ENCODE measurements at regions of chr2 and their contacts with region 1.

Region 1: GRCh38 chr2:227479865-227480475 is 8.0 kb downstream of the AGFG1 start:
- DNase-seq: peak; percentile 35
- ATAC-seq: no peak
- H3K4me3 ChIP-seq: no peak overlapping the region
- H3K4me3 Mint-ChIP-seq: no peak overlapping the region
- H3K27ac ChIP-seq: peak overlapping the region in 1 of 2 donors; percentile 63
- H3K27ac Mint-ChIP-seq: no peak overlapping the region
- H3K4me1 ChIP-seq: peaks cover 20 to 40% of the 10 kb centered on the region in 2 donors
- H3K4me1 Mint-ChIP-seq: peaks cover 61% of the 10 kb centered on the region
- H3K27me3 ChIP-seq: no peaks in the 10 kb centered on the region
- H3K27me3 Mint-ChIP-seq: no peaks in the 10 kb centered on the region
- CTCF ChIP-seq: peak; percentile 44

Region 2: GRCh38 chr2:226118471-226119430 is 1361.2 kb before region 1 on chr2:
- CTCF ChIA-PET with region 1: no interaction called
- POLR2A ChIA-PET with region 1: no interaction called
- intact Hi-C with region 1: no loop called
- DNase-seq: no peak
- ATAC-seq: no peak
- H3K4me3 ChIP-seq: no peak overlapping the region
- H3K4me3 Mint-ChIP-seq: no peak overlapping the region
- H3K27ac ChIP-seq: no peak overlapping the region
- H3K27ac Mint-ChIP-seq: no peak overlapping the region
- H3K4me1 ChIP-seq: no peaks in the 10 kb centered on the region
- H3K4me1 Mint-ChIP-seq: peaks cover 3% of the 10 kb centered on the region
- H3K27me3 ChIP-seq: peaks cover 0 to 5% (median 0%) of the 10 kb centered on the region in 4 experiments
- H3K27me3 Mint-ChIP-seq: peaks cover 4% of the 10 kb centered on the region
- CTCF ChIP-seq: no peak

Region 3: DNA sequence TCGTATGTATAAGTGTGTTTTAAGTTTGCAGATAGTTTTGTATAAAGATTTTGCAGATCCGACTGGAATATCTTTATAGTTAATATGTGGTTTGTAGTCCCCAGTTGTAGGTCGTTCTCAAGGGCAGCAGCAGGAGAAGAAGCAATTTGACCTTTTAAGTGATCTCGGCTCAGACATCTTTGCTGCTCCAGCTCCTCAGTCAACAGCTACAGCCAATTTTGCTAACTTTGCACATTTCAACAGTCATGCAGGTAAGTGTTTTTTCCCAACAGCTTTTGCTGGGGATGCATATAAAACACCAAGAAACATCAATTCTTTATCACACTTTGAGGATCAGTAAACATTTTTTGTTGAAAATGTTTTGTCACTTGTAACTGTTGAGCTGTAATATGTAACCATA is 44.7 kb after region 1 on chr2:
- CTCF ChIA-PET with region 1: interaction called, 5 read pairs
- POLR2A ChIA-PET with region 1: no interaction called
- intact Hi-C with region 1: loop called (anchors 5 kb)
- DNase-seq: no peak
- ATAC-seq: no peak
- H3K4me3 ChIP-seq: no peak overlapping the region
- H3K4me3 Mint-ChIP-seq: no peak overlapping the region
- H3K27ac ChIP-seq: no peak overlapping the region
- H3K27ac Mint-ChIP-seq: no peak overlapping the region
- H3K4me1 ChIP-seq: no peaks in the 10 kb centered on the region
- H3K4me1 Mint-ChIP-seq: peaks cover 15% of the 10 kb centered on the region
- H3K27me3 ChIP-seq: no peaks in the 10 kb centered on the region
- H3K27me3 Mint-ChIP-seq: no peaks in the 10 kb centered on the region
- CTCF ChIP-seq: no peak

Measured in B cell (primary cell).